MCF 10A (cell line): ENCODE measurements at regions of chr1 and their contacts with region 1.

Region 1: DNA sequence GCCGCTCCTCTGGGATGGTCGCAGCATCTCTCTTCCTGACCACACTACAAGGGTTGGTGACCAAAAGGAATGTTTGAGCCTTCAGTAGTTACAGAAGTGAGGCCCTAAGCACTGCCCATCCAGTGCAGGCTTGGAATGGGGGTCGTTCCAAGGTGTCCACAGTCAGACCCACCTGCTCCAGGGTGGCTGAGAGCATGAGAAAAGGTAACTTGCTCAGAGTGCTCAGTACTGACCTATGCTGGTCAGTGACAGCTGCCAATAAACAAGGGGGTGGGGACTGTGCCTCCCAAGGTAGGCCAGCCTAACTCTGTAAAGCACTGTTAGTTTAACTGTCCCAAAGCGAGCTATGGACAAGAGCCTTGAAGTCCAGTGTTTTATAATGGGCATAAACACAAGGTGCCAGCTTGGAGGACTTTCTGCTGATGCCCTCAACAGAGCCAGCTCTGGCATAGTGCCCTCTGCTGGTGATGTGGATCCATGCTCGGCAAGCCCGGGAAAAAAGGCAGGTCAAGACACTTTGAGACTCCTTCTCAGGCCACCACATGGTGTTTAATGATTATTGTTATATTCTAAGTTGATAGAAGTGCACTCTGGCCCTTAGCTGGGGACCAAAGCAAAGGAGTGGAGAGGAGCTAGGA is 78.1 kb upstream of the DNAH14 start:
- DNase-seq: peak; percentile 85
- H3K4me3 Mint-ChIP-seq: no peak overlapping the region
- H3K27ac Mint-ChIP-seq: no peak overlapping the region
- H3K4me1 Mint-ChIP-seq: peaks cover 6% of the 10 kb centered on the region
- H3K27me3 Mint-ChIP-seq: peaks cover 9% of the 10 kb centered on the region
- CTCF ChIP-seq: peak; percentile 98

Region 2: DNA sequence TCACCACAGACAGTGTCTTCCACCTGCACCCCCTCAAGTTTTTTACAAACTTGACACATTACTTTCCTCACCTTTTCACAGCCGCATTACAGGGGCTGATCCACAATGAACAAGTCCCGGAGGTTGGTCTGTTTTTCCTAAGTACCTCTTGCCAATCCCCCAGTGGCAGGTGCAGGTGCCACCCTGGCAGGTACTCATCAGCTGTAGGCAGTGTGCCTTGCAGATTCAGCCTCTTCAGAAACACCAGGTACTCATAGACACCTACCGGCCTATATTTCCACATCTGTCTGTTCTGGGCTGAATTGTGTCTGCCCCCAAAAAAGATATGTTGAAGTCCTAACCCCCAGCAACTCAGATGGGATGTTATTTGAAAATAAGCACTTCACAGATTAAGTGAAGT is 316.6 kb before region 1 on chr1:
- CTCF ChIA-PET with region 1: interaction called, 22 read pairs
- POLR2A ChIA-PET with region 1: no interaction called
- intact Hi-C with region 1: no loop called
- DNase-seq: no peak
- H3K4me3 Mint-ChIP-seq: no peak overlapping the region
- H3K27ac Mint-ChIP-seq: no peak overlapping the region
- H3K4me1 Mint-ChIP-seq: peaks cover 4% of the 10 kb centered on the region
- H3K27me3 Mint-ChIP-seq: no peaks in the 10 kb centered on the region
- CTCF ChIP-seq: no peak

Region 3: GRCh38 chr1:224656392-224656791 is 194.9 kb before region 1 on chr1:
- CTCF ChIA-PET with region 1: interaction called, 31 read pairs
- POLR2A ChIA-PET with region 1: no interaction called
- intact Hi-C with region 1: no loop called
- DNase-seq: no peak
- H3K4me3 Mint-ChIP-seq: no peak overlapping the region
- H3K27ac Mint-ChIP-seq: no peak overlapping the region
- H3K4me1 Mint-ChIP-seq: peaks cover 12% of the 10 kb centered on the region
- H3K27me3 Mint-ChIP-seq: no peaks in the 10 kb centered on the region
- CTCF ChIP-seq: no peak

Region 4: DNA sequence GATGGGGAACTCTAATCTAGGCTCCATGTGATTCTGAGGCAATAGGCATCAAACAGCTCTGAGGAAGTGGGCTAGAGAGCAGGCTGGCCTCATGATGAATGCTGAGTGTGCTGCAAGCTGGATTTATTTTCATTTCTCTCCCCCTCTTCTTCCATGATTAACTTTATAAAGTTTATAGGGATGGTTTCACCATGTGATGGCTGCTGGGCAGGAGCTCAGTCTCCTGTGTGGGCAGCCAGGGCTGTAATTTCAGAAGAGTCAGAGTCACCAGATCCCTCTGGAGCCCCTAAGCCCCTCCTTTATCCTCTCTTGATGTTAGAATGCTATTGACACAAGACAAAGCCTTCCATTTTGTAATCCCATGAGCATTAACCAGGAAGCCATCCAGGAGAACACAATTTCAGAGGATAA is 91.6 kb before region 1 on chr1:
- CTCF ChIA-PET with region 1: interaction called, 12 read pairs
- POLR2A ChIA-PET with region 1: no interaction called
- intact Hi-C with region 1: no loop called
- DNase-seq: no peak
- H3K4me3 Mint-ChIP-seq: no peak overlapping the region
- H3K27ac Mint-ChIP-seq: no peak overlapping the region
- H3K4me1 Mint-ChIP-seq: no peaks in the 10 kb centered on the region
- H3K27me3 Mint-ChIP-seq: peaks cover 1% of the 10 kb centered on the region
- CTCF ChIP-seq: no peak

Region 5: GRCh38 chr1:224828691-224829090 is 22.6 kb before region 1 on chr1:
- CTCF ChIA-PET with region 1: interaction called, 42 read pairs
- POLR2A ChIA-PET with region 1: interaction called, 3 read pairs
- intact Hi-C with region 1: no loop called
- DNase-seq: no peak
- H3K4me3 Mint-ChIP-seq: no peak overlapping the region
- H3K27ac Mint-ChIP-seq: no peak overlapping the region
- H3K4me1 Mint-ChIP-seq: no peaks in the 10 kb centered on the region
- H3K27me3 Mint-ChIP-seq: no peaks in the 10 kb centered on the region
- CTCF ChIP-seq: no peak

Region 6: DNA sequence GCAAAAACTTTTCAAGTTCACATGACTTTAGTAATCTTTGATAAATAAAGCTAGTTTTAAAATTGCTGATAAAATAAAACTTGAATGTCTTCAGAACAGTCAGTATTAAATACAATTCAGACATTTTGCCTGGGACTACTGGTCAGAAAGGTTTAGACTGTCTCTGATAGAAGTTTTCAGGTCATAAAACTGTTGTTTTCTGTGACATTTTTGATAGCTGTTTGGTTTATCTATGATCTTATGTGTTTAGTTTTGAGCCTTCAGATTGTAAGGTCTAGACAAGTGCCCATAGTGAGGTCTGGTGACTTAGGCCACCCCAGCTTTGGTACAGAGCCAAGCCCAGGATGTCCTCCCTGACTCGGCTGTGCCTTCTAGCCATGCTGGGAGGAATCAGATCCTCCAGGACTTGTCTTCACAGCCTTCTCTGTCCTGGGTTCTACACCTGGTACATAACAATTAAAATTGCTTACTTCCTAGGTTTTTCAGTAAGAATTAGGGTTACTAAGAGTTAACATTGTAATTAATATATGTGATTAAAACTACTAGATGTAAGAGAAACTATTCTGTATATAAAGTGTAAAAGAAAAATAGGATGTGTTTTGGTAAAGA is 63.1 kb after region 1 on chr1:
- CTCF ChIA-PET with region 1: interaction called, 49 read pairs
- POLR2A ChIA-PET with region 1: no interaction called
- intact Hi-C with region 1: no loop called
- DNase-seq: no peak
- H3K4me3 Mint-ChIP-seq: no peak overlapping the region
- H3K27ac Mint-ChIP-seq: no peak overlapping the region
- H3K4me1 Mint-ChIP-seq: no peaks in the 10 kb centered on the region
- H3K27me3 Mint-ChIP-seq: no peaks in the 10 kb centered on the region
- CTCF ChIP-seq: no peak